ENCODE measurements at regions of chr1 and their contacts with region 1.

Region 1: GRCh38 chr1:181088079-181089016 is at the start of gene IER5:
- DNase-seq: peak; percentile 97
- ATAC-seq: peak; percentile 80
- H3K4me3 Mint-ChIP-seq: peak within 1 kb of the TSS; percentile 97
- H3K27ac Mint-ChIP-seq: peak within 1 kb of the TSS; percentile 97
- H3K4me1 Mint-ChIP-seq: peaks cover 53% of the 10 kb centered on the region
- H3K27me3 Mint-ChIP-seq: peaks cover 3% of the 10 kb centered on the region
- total RNA-seq, gene IER5: 37.2 to 38.0 TPM

Region 2: GRCh38 chr1:181033799-181034451 is 54.4 kb before region 1 on chr1 and contains the start of gene MR1:
- CTCF ChIA-PET with region 1: interaction called, 42 read pairs
- POLR2A ChIA-PET with region 1: interaction called, 17 read pairs
- DNase-seq: peak; percentile 71
- ATAC-seq: peak; percentile 97
- H3K4me3 Mint-ChIP-seq: peak within 1 kb of the TSS; percentile 97
- H3K27ac Mint-ChIP-seq: peak within 1 kb of the TSS; percentile 97
- H3K4me1 Mint-ChIP-seq: peaks cover 55% of the 10 kb centered on the region
- H3K27me3 Mint-ChIP-seq: no peaks in the 10 kb centered on the region
- total RNA-seq, gene MR1: 27.9 to 29.3 TPM

Region 3: DNA sequence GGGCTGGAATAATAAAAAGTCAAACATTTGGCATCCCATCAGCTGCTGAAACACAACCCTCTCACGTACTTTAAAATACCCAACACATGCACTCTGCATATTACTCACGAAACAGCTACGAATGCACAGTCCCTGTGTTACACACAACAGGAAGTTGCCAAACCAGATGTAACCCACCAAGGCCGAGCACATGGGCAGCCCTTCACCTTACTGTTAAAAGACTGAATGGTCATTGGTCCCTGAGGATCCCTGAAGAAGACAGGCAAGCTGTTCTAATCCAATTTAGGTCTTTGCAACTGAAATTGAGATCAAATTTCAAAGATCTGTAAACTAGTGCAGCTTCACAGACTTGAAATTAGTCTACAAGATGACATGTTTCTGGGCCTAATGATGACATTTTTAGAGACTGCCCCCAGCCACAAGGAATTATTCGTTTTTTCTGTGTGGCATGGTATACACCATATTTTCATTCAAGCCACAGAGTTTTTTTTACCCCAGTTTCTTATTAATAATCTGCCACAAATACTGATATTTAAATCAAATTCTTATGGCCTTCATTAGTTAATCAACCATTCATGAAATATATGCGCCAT is 25.4 kb before region 1 on chr1:
- CTCF ChIA-PET with region 1: interaction called, 13 read pairs
- POLR2A ChIA-PET with region 1: interaction called, 22 read pairs
- DNase-seq: peak; percentile 69
- ATAC-seq: peak; percentile 89
- H3K4me3 Mint-ChIP-seq: peak overlapping the region; percentile 60
- H3K27ac Mint-ChIP-seq: peak overlapping the region; percentile 94
- H3K4me1 Mint-ChIP-seq: peaks cover 22% of the 10 kb centered on the region
- H3K27me3 Mint-ChIP-seq: no peaks in the 10 kb centered on the region

Region 4: GRCh38 chr1:181134543-181135362 is 46.4 kb after region 1 on chr1:
- CTCF ChIA-PET with region 1: interaction called, 395 read pairs
- POLR2A ChIA-PET with region 1: interaction called, 114 read pairs
- DNase-seq: peak; percentile 49
- ATAC-seq: peak; percentile 66
- H3K4me3 Mint-ChIP-seq: peak overlapping the region; percentile 52
- H3K27ac Mint-ChIP-seq: peak overlapping the region; percentile 95
- H3K4me1 Mint-ChIP-seq: peaks cover 82% of the 10 kb centered on the region
- H3K27me3 Mint-ChIP-seq: no peaks in the 10 kb centered on the region

Region 5: GRCh38 chr1:181166377-181167196 is 78.2 kb after region 1 on chr1:
- CTCF ChIA-PET with region 1: interaction called, 16 read pairs
- POLR2A ChIA-PET with region 1: interaction called, 7 read pairs
- DNase-seq: peak; percentile 84
- ATAC-seq: peak; percentile 100
- H3K4me3 Mint-ChIP-seq: no peak overlapping the region
- H3K27ac Mint-ChIP-seq: peak overlapping the region; percentile 53
- H3K4me1 Mint-ChIP-seq: peaks cover 8% of the 10 kb centered on the region
- H3K27me3 Mint-ChIP-seq: peaks cover 6% of the 10 kb centered on the region

Region 6: DNA sequence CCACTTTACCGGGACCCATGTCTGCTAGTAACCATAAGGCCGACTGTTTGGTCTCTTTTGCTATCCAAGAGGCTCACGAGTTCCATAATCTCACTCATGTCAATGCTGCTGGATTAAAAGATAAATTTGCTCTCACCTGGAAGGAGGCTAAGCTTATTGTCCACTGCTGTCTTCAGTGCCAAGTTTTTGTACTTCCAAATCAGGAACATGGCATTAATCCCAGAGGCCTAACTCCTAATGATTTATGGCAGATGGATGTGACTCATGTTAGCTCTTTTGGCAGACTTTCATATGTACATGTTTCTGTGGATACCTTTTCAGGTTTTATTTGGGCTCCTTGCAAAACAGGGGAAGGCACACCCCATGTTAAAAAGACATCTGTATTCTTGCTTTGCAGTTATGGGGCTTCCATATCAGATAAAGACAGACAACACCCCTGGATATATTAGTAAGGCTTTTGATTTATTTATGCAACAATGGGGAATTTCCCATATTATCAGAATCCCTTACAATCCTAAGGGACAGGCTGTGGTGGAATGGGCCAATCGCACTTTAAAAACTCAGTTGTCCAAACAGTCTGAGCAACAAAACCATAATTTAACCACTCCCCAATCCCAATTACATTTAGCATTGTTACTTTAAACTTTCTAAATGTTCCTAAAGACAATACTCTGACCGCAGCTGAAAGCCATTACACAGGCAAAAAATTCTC is 162.8 kb after region 1 on chr1:
- CTCF ChIA-PET with region 1: no interaction called
- POLR2A ChIA-PET with region 1: no interaction called
- DNase-seq: no peak
- ATAC-seq: no peak
- H3K4me3 Mint-ChIP-seq: no peak overlapping the region
- H3K27ac Mint-ChIP-seq: no peak overlapping the region
- H3K4me1 Mint-ChIP-seq: no peaks in the 10 kb centered on the region
- H3K27me3 Mint-ChIP-seq: no peaks in the 10 kb centered on the region